Activated naive CD4-positive, alpha-beta T cell treated with anti-CD3 and anti-CD28 coated beads for 36 hours (primary cell): ENCODE measurements at regions of chr2 and their contacts with region 1.

Region 1: DNA sequence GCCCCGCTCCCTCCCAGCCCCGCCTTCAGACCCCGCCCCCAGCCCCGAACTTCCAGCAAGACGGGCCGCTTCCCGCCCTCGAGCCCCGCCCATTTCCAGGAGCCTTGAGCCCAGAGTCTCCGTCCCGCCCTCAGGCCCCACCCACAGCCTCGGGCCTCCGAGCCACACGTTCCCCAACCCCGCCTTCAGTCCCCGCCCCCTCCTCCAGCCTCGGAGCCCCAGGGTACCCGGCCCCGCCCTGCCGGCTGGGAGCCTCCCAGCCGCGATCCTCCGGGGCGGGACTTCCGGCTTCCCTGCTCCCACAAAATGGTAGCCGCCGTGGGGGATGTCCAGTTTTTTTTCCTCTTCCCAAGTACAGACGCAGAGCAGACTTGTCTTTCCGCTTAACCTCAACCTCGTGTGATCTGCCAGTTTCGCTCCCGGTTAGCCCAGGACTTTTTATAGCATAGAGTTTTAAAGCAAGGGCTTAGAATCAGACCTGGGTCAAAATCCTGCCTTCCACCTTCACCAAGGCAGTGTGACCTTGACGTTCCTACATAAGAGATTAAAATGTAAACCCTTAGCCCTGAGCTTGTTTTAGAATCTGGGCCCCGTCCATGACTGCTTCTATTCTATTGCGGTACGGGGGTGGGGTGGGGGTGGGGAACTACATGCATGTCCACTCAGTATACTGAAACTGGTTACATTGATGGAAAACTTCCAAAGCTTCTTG is 435 bp upstream of the GPR155 start:
- DNase-seq: peak; percentile 100
- H3K4me3 Mint-ChIP-seq: peak overlapping the region; percentile 97
- H3K27ac Mint-ChIP-seq: peak overlapping the region; percentile 95
- H3K4me1 Mint-ChIP-seq: peaks cover 51% of the 10 kb centered on the region
- H3K27me3 Mint-ChIP-seq: no peaks in the 10 kb centered on the region

Region 2: GRCh38 chr2:174248187-174248997 is 238.9 kb before region 1 on chr2 and contains the start of gene OLA1:
- CTCF ChIA-PET with region 1: no interaction called
- intact Hi-C with region 1: loop called (anchors 1 kb)
- DNase-seq: peak; percentile 97
- H3K4me3 Mint-ChIP-seq: peak within 1 kb of the TSS; percentile 84
- H3K27ac Mint-ChIP-seq: peak within 1 kb of the TSS; percentile 79
- H3K4me1 Mint-ChIP-seq: peaks cover 25% of the 10 kb centered on the region
- H3K27me3 Mint-ChIP-seq: no peaks in the 10 kb centered on the region
- total RNA-seq, gene OLA1: 140 to 142 TPM

Region 3: DNA sequence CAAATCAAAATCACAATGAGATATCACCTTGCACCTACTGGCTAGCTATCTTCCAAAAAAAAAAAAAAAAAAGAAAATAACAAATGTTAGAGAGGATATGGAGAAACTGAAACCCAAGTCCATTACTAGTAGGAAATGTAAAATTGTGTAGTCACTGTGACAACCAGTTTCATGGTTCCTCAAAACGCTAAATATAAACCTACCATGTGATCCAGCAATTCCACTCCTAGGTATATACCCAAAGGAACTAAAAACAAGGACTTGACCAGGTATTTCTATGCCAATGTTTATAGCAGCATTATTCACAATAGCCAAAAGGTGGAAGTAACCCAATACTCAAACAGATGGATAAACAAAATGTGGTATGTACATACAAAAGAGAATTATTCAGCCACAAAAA is 103.5 kb before region 1 on chr2:
- CTCF ChIA-PET with region 1: no interaction called
- intact Hi-C with region 1: no loop called
- DNase-seq: no peak
- H3K4me3 Mint-ChIP-seq: no peak overlapping the region
- H3K27ac Mint-ChIP-seq: no peak overlapping the region
- H3K4me1 Mint-ChIP-seq: peaks cover 12% of the 10 kb centered on the region
- H3K27me3 Mint-ChIP-seq: no peaks in the 10 kb centered on the region

Region 4: DNA sequence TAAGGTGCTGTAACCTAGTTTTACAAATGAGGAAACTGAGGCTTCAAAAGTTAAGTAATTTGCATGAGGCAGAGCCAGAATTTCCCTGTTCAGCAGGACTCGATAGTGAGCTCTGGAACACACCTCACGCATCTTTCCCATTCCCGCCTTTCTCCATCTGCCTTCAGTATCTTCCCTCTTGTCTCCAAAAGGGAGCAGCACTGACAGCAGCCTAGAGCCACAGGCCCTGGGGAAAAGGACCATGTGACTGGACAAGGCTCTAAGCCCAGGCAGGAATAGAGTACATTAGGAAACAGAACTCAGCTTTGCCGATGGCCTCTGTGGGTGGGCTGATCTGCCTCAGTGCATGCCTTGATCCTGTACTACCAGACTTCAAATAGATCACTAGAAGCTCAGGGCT is 21.9 kb before region 1 on chr2:
- CTCF ChIA-PET with region 1: interaction called, 52 read pairs
- intact Hi-C with region 1: no loop called
- DNase-seq: no peak
- H3K4me3 Mint-ChIP-seq: no peak overlapping the region
- H3K27ac Mint-ChIP-seq: no peak overlapping the region
- H3K4me1 Mint-ChIP-seq: no peaks in the 10 kb centered on the region
- H3K27me3 Mint-ChIP-seq: no peaks in the 10 kb centered on the region

Region 5: GRCh38 chr2:174568425-174568824 is 81.2 kb after region 1 on chr2:
- CTCF ChIA-PET with region 1: interaction called, 3 read pairs
- intact Hi-C with region 1: loop called (anchors 1 kb)
- DNase-seq: peak; percentile 34
- H3K4me3 Mint-ChIP-seq: no peak overlapping the region
- H3K27ac Mint-ChIP-seq: peak overlapping the region; percentile 81
- H3K4me1 Mint-ChIP-seq: peaks cover 62% of the 10 kb centered on the region
- H3K27me3 Mint-ChIP-seq: no peaks in the 10 kb centered on the region

Region 6: GRCh38 chr2:174603280-174603679 is 116.0 kb after region 1 on chr2:
- CTCF ChIA-PET with region 1: interaction called, 3 read pairs
- intact Hi-C with region 1: loop called (anchors 1 kb)
- DNase-seq: peak; percentile 85
- H3K4me3 Mint-ChIP-seq: no peak overlapping the region
- H3K27ac Mint-ChIP-seq: peak overlapping the region; percentile 76
- H3K4me1 Mint-ChIP-seq: peaks cover 81% of the 10 kb centered on the region
- H3K27me3 Mint-ChIP-seq: no peaks in the 10 kb centered on the region

Region 7: DNA sequence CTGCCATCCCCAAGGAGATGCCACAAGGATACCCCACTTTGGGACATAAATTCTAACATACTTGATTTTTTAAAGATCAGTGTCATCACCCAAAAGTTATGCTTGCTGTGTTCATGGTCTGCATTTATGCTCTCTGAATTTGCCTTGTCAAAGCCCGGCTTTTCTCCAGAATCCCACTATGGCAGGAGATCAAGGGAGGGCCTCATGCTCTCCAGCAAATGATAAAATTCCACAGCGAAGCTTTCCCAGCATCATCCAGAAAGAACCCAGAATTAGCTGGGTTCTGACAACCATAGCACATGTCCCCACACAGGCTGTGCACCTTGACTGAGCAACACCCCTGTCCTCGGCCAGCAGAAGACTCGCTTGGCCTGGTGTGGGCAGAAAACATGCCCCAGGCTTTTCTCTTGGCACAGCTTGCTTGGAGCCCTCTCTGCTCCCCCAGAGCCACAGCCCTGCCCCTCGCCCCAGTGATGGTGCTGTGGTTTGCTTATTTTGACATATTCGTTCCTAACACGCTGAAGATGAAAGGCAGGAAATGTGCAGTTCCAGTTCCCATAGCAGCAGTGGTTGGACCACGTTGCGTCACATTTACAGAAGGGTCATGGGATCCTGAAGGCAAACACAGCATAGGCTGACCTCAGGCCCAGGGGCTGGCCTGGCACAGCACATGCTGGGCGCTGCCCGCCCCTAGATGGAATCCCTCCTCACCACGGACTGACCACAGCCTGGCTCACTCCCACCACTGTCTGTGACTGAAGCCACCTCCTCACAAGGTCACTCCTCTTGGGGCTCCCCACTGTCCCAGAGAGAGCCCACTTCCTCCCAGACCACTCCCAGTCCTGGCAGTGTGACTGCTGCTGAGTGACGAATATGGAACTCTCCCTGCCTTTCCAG is 291.1 kb after region 1 on chr2:
- CTCF ChIA-PET with region 1: no interaction called
- intact Hi-C with region 1: loop called (anchors 2 kb)
- DNase-seq: peak; percentile 92
- H3K4me3 Mint-ChIP-seq: no peak overlapping the region
- H3K27ac Mint-ChIP-seq: peak overlapping the region; percentile 70
- H3K4me1 Mint-ChIP-seq: peaks cover 45% of the 10 kb centered on the region
- H3K27me3 Mint-ChIP-seq: no peaks in the 10 kb centered on the region